ENCODE measurements at regions of chr2 and their contacts with region 1.

Region 1: GRCh38 chr2:197113275-197113711 is 186.8 kb upstream of the PGAP1 start:
- DNase-seq: no peak
- ATAC-seq: no peak
- H3K4me3 Mint-ChIP-seq: no peak overlapping the region
- H3K27ac Mint-ChIP-seq: peak overlapping the region; percentile 81
- H3K4me1 Mint-ChIP-seq: peaks cover 25% of the 10 kb centered on the region
- H3K27me3 Mint-ChIP-seq: no peaks in the 10 kb centered on the region

Region 2: DNA sequence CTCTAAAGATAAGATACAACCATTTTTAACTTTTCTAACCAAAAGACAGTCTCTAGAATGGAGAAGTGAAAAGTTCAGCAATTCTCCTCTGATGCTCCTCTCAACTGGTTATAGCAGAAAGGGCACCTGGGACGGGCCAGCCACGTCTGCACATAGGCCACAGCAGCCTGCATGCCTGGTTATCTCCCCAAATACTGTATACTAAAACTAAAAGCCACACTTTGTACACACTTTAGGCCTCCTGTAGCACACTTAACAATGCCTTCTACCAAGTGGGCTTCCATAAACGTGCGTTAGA is 18.2 kb after region 1 on chr2:
- CTCF ChIA-PET with region 1: interaction called, 37 read pairs
- POLR2A ChIA-PET with region 1: no interaction called
- DNase-seq: no peak
- ATAC-seq: no peak
- H3K4me3 Mint-ChIP-seq: no peak overlapping the region
- H3K27ac Mint-ChIP-seq: peak overlapping the region; percentile 65
- H3K4me1 Mint-ChIP-seq: peaks cover 78% of the 10 kb centered on the region
- H3K27me3 Mint-ChIP-seq: no peaks in the 10 kb centered on the region

Region 3: GRCh38 chr2:197159661-197160211 is 46.4 kb after region 1 on chr2:
- CTCF ChIA-PET with region 1: interaction called, 145 read pairs
- POLR2A ChIA-PET with region 1: no interaction called
- DNase-seq: peak; percentile 47
- ATAC-seq: peak; percentile 78
- H3K4me3 Mint-ChIP-seq: peak overlapping the region; percentile 4
- H3K27ac Mint-ChIP-seq: peak overlapping the region; percentile 55
- H3K4me1 Mint-ChIP-seq: peaks cover 68% of the 10 kb centered on the region
- H3K27me3 Mint-ChIP-seq: no peaks in the 10 kb centered on the region

Region 4: GRCh38 chr2:197191177-197191939 is 78.1 kb after region 1 on chr2:
- CTCF ChIA-PET with region 1: interaction called, 34 read pairs
- POLR2A ChIA-PET with region 1: no interaction called
- DNase-seq: no peak
- ATAC-seq: peak; percentile 43
- H3K4me3 Mint-ChIP-seq: peak overlapping the region; percentile 27
- H3K27ac Mint-ChIP-seq: peak overlapping the region; percentile 44
- H3K4me1 Mint-ChIP-seq: peaks cover 78% of the 10 kb centered on the region
- H3K27me3 Mint-ChIP-seq: no peaks in the 10 kb centered on the region

Region 5: DNA sequence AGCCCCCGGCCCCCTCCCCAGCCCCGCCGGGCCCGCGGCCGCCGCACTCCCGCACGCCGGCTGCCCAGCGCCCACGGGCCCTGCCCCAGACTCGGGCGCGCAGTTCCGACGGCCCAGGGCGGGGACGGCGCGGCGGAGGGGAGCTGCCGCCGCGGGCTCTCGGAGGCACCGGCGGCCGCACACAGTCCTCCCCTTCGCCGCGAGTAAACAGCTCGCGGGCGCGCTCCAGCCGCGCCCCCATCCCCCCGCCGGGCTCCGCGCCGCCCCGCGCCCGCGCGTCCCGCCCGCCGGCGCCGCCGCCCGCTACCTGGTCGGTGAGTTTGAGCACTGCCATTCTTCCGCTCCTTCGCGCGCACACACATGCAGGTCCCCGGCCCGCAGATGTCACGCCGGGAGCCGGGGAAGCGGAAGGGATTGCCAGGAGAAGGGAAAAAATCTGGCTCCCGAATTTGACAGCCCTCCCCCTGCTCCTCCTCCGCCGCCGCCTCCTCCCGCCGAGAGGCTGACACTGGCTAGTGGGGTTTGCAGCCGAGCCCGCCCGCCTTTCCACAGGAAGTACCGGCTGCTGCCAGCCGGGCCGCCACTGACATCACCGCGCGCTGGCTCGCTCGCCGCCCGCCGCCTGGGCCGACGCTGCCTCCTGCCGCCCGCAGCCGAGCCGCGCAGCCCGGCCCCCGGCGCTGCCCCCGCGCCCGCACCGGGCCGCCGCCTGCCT is 197.1 kb after region 1 on chr2 and contains the start of gene ANKRD44:
- CTCF ChIA-PET with region 1: interaction called, 36 read pairs
- POLR2A ChIA-PET with region 1: interaction called, 4 read pairs
- DNase-seq: peak; percentile 91
- ATAC-seq: peak; percentile 73
- H3K4me3 Mint-ChIP-seq: peak within 1 kb of the TSS; percentile 95
- H3K27ac Mint-ChIP-seq: peak within 1 kb of the TSS; percentile 95
- H3K4me1 Mint-ChIP-seq: peaks cover 57% of the 10 kb centered on the region
- H3K27me3 Mint-ChIP-seq: no peaks in the 10 kb centered on the region
- total RNA-seq, gene ANKRD44: 188 to 224 TPM

Region 6: GRCh38 chr2:197378494-197379307 is 265.4 kb after region 1 on chr2:
- CTCF ChIA-PET with region 1: interaction called, 17 read pairs
- POLR2A ChIA-PET with region 1: no interaction called
- DNase-seq: peak; percentile 75
- ATAC-seq: peak; percentile 77
- H3K4me3 Mint-ChIP-seq: no peak overlapping the region
- H3K27ac Mint-ChIP-seq: no peak overlapping the region
- H3K4me1 Mint-ChIP-seq: peaks cover 24% of the 10 kb centered on the region
- H3K27me3 Mint-ChIP-seq: peaks cover 4% of the 10 kb centered on the region

Measured in activated CD8-positive, alpha-beta T cell treated with anti-CD3 and anti-CD28 coated beads, Interleukin-2, amount 10 ng/mL, durations not matched to agents 7 days and 5 days (primary cell).